Activated CD4-positive, alpha-beta memory T cell treated with anti-CD3 and anti-CD28 coated beads for 36 hours (primary cell): ENCODE measurements at regions of chr11 and their contacts with region 1.

Region 1: GRCh38 chr11:118295834-118296454 is 8.6 kb upstream of the CD3E start:
- DNase-seq: peak; percentile 63
- H3K4me3 Mint-ChIP-seq: peak overlapping the region; percentile 22
- H3K27ac Mint-ChIP-seq: peak overlapping the region; percentile 61
- H3K4me1 Mint-ChIP-seq: peaks cover 17% of the 10 kb centered on the region
- H3K27me3 Mint-ChIP-seq: no peaks in the 10 kb centered on the region

Region 2: GRCh38 chr11:118251858-118252652 is 43.9 kb before region 1 on chr11 and contains the start of gene MPZL3:
- CTCF ChIA-PET with region 1: interaction called, 16 read pairs
- POLR2A ChIA-PET with region 1: interaction called, 4 read pairs
- intact Hi-C with region 1: no loop called
- DNase-seq: peak; percentile 89
- H3K4me3 Mint-ChIP-seq: peak within 1 kb of the TSS; percentile 99
- H3K27ac Mint-ChIP-seq: peak within 1 kb of the TSS; percentile 97
- H3K4me1 Mint-ChIP-seq: peaks cover 37% of the 10 kb centered on the region
- H3K27me3 Mint-ChIP-seq: no peaks in the 10 kb centered on the region
- total RNA-seq, gene MPZL3: 47.3 to 49.0 TPM

Region 3: GRCh38 chr11:118277306-118277705 is 18.6 kb before region 1 on chr11:
- CTCF ChIA-PET with region 1: interaction called, 33 read pairs
- POLR2A ChIA-PET with region 1: no interaction called
- intact Hi-C with region 1: no loop called
- DNase-seq: peak; percentile 42
- H3K4me3 Mint-ChIP-seq: no peak overlapping the region
- H3K27ac Mint-ChIP-seq: peak overlapping the region; percentile 40
- H3K4me1 Mint-ChIP-seq: peaks cover 40% of the 10 kb centered on the region
- H3K27me3 Mint-ChIP-seq: no peaks in the 10 kb centered on the region

Region 4: GRCh38 chr11:118343981-118344515 is 48.1 kb after region 1 on chr11 and contains the start of gene CD3G:
- CTCF ChIA-PET with region 1: interaction called, 34 read pairs
- POLR2A ChIA-PET with region 1: interaction called, 3 read pairs
- intact Hi-C with region 1: no loop called
- DNase-seq: peak; percentile 81
- H3K4me3 Mint-ChIP-seq: peak within 1 kb of the TSS; percentile 82
- H3K27ac Mint-ChIP-seq: peak within 1 kb of the TSS; percentile 98
- H3K4me1 Mint-ChIP-seq: peaks cover 52% of the 10 kb centered on the region
- H3K27me3 Mint-ChIP-seq: no peaks in the 10 kb centered on the region
- total RNA-seq, gene CD3G: 137 to 138 TPM

Region 5: DNA sequence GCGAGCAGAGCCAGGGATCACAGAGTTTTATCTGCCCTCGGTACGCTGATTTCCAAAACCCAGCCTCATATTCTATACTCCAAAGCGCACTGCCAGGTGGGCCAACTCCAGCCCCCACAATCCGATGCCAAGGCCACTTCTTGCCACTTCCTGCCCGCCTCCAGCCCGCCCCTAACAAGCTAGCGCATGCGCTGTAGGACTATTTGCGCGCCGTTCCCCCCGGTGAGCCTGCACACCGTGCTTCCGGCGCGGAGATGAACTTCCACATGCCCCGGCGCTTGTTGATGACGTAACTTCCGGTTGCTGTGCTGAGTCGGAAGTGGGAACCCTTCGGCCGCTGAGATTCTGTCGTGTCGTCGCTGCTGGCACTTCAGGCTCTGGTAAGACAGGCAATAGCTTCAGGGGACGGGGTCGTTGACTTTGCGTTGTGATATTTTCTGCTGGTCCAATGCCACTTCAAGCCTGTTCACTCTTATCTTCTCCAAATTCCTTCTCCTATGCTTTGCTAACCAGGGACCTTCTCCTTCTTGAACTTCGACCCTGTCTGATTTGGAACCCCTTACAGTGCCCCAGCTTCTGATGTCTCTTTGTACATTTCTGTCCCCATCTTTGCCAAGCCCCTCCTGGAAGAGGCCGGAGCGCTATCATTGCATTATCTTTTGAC is 63.5 kb after region 1 on chr11 and contains the start of gene UBE4A:
- CTCF ChIA-PET with region 1: interaction called, 19 read pairs
- POLR2A ChIA-PET with region 1: no interaction called
- intact Hi-C with region 1: no loop called
- DNase-seq: peak; percentile 99
- H3K4me3 Mint-ChIP-seq: peak within 1 kb of the TSS; percentile 96
- H3K27ac Mint-ChIP-seq: peak within 1 kb of the TSS; percentile 93
- H3K4me1 Mint-ChIP-seq: peaks cover 45% of the 10 kb centered on the region
- H3K27me3 Mint-ChIP-seq: peaks cover 2% of the 10 kb centered on the region
- total RNA-seq, gene UBE4A: 39.1 to 40.4 TPM

Region 6: DNA sequence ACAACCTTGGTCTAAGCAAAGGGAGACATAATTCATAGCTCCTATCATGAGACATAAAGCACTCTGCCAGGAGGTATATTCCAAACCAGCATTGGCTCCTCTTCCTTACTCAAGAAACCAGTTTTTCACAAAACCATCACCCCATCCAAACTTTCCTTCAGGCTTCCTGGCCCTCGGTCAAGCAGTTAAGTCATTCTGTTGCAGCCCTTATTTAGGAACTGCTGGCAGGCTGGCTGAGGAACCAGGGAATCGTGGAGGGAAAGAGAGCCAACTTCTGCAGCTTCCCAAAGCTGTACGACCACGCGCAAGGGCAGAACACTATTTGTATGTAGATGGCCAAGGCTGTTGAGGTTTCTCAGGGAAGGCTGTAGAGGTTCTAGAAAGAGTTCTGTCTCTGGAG is 269.1 kb after region 1 on chr11:
- CTCF ChIA-PET with region 1: interaction called, 5 read pairs
- POLR2A ChIA-PET with region 1: no interaction called
- intact Hi-C with region 1: loop called (anchors 1 kb)
- DNase-seq: no peak
- H3K4me3 Mint-ChIP-seq: peak overlapping the region; percentile 67
- H3K27ac Mint-ChIP-seq: no peak overlapping the region
- H3K4me1 Mint-ChIP-seq: peaks cover 7% of the 10 kb centered on the region
- H3K27me3 Mint-ChIP-seq: no peaks in the 10 kb centered on the region

Region 7: GRCh38 chr11:118763041-118763440 is 467.1 kb after region 1 on chr11:
- CTCF ChIA-PET with region 1: no interaction called
- POLR2A ChIA-PET with region 1: no interaction called
- intact Hi-C with region 1: no loop called
- DNase-seq: no peak
- H3K4me3 Mint-ChIP-seq: no peak overlapping the region
- H3K27ac Mint-ChIP-seq: no peak overlapping the region
- H3K4me1 Mint-ChIP-seq: peaks cover 9% of the 10 kb centered on the region
- H3K27me3 Mint-ChIP-seq: no peaks in the 10 kb centered on the region